ENCODE measurements at regions of chr6 and their contacts with region 1.

Region 1: GRCh38 chr6:15621203-15622044 is 41.4 kb downstream of the DTNBP1 start:
- DNase-seq: peak; percentile 84
- ATAC-seq: peak; percentile 84

Region 2: GRCh38 chr6:14130435-14131075 is 1490.9 kb before region 1 on chr6:
- intact Hi-C with region 1: loop called (anchors 5 kb)
- DNase-seq: no peak
- ATAC-seq: no peak

Region 3: DNA sequence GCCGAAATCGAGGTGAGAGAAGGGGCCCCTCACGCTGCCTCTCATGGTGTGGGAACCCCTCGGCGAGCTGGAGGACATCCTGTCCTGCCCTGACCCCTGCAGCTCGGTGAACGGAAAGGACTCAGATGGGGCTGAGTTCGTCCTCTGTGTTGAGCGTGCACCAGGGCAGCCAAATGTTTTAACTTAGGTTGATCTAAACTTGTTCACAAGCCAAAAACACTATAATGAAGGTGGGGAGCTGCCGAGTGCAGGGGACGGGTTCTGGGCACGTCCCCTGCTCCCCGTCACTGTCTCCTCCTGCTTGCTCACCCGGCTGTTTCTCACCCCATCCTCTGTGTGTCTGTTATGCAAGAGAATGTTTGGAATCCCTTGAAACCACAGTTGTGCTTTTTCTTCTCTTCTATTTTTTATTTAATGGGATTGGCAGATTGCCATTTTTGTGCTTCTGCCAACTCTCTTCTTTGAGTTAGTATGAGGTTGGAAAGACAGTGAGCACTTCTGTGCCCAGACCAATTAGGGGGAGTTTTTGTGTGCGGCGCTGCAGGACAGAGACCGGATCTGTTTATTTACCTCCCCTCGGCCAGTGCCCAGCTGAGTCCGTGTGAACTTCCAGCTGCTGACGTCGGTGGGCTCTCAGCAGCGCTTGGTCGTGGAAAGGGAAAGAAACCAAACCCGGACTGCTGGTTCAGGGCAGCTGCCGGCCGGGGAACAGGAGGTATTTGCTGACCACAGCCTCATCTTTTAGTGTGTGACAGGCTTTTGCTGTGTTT is 116.7 kb before region 1 on chr6:
- intact Hi-C with region 1: loop called (anchors 2 kb)
- DNase-seq: peak; percentile 83
- ATAC-seq: peak; percentile 80

Region 4: GRCh38 chr6:15512126-15512525 is 109.3 kb before region 1 on chr6:
- intact Hi-C with region 1: loop called (anchors 2 kb)
- DNase-seq: no peak
- ATAC-seq: peak; percentile 68

Region 5: GRCh38 chr6:15608396-15608795 is 13.0 kb before region 1 on chr6:
- intact Hi-C with region 1: no loop called
- DNase-seq: no peak
- ATAC-seq: peak; percentile 50

Region 6: GRCh38 chr6:15698471-15698870 is 77.0 kb after region 1 on chr6:
- intact Hi-C with region 1: no loop called
- DNase-seq: no peak
- ATAC-seq: no peak

Measured in Right ventricle myocardium inferior (tissue), 1 donor.